ENCODE measurements at regions of chr2 and their contacts with region 1.

Region 1: GRCh38 chr2:43131024-43131889 is 95.1 kb downstream of the ZFP36L2 start:
- DNase-seq: peak; percentile 93
- H3K4me3 Mint-ChIP-seq: peak overlapping the region; percentile 64
- H3K27ac Mint-ChIP-seq: peak overlapping the region; percentile 84
- H3K4me1 Mint-ChIP-seq: peaks cover 78% of the 10 kb centered on the region
- H3K27me3 Mint-ChIP-seq: no peaks in the 10 kb centered on the region

Region 2: GRCh38 chr2:42947809-42948600 is 183.3 kb before region 1 on chr2:
- intact Hi-C with region 1: loop called (anchors 2 kb)
- DNase-seq: no peak
- H3K4me3 Mint-ChIP-seq: no peak overlapping the region
- H3K27ac Mint-ChIP-seq: no peak overlapping the region
- H3K4me1 Mint-ChIP-seq: peaks cover 3% of the 10 kb centered on the region
- H3K27me3 Mint-ChIP-seq: peaks cover 3% of the 10 kb centered on the region

Region 3: DNA sequence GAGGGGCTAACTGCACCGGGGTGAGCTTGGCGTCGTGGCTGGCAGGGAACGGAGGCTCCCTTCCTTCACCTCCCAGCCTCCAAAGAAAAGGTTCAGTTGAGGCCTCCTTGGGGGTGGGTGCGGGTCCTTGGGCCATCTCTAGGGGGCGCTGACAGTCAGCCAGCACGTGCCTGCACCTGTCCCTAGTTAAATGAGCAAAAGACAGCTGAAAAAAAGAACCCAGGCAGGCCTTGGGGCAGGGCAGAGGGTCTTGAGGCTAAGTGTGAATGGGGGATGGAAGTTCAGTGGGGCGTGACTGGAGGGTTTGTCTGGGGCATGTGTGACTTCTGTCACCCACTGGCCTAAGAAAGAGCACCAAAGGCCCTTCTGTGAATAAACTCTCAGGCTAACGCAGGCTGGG is 38.7 kb after region 1 on chr2:
- intact Hi-C with region 1: loop called (anchors 1 kb)
- DNase-seq: peak; percentile 90
- H3K4me3 Mint-ChIP-seq: peak overlapping the region; percentile 77
- H3K27ac Mint-ChIP-seq: peak overlapping the region; percentile 97
- H3K4me1 Mint-ChIP-seq: peaks cover 67% of the 10 kb centered on the region
- H3K27me3 Mint-ChIP-seq: no peaks in the 10 kb centered on the region

Region 4: GRCh38 chr2:43293744-43294695 is 162.8 kb after region 1 on chr2:
- intact Hi-C with region 1: loop called (anchors 5 kb)
- DNase-seq: peak; percentile 88
- H3K4me3 Mint-ChIP-seq: peak overlapping the region; percentile 49
- H3K27ac Mint-ChIP-seq: peak overlapping the region; percentile 76
- H3K4me1 Mint-ChIP-seq: peaks cover 24% of the 10 kb centered on the region
- H3K27me3 Mint-ChIP-seq: no peaks in the 10 kb centered on the region

Region 5: DNA sequence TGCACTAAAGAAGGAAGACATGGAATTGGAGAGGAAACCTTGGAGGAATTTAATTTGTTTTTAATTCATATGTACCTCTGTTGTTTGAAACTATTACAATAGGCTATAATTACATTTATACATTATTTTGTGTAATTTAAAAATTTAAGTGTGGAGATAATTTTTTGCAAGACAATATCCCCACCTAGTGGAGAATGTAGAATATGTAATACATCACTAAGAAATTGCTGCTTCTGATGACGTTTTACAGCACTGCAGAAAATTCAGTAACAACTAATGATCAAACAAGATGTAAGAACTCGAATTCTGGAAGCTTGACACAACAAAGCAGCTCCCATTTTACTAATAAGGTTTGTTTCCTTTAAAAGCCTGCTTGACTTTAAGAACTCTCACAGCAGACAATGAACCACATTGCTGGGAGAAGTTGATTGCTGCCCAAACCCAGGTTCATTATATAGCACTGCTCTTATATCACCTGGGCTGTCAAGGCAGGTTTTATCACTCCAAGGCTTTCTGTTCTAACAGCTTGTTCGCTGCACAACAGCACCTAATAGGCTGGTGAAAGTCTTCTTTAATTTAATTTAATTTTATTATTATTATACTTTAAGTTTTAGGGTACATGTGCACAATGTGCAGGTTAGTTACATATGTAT is 411.2 kb after region 1 on chr2:
- intact Hi-C with region 1: loop called (anchors 2 kb)
- DNase-seq: peak; percentile 56
- H3K4me3 Mint-ChIP-seq: no peak overlapping the region
- H3K27ac Mint-ChIP-seq: no peak overlapping the region
- H3K4me1 Mint-ChIP-seq: peaks cover 8% of the 10 kb centered on the region
- H3K27me3 Mint-ChIP-seq: no peaks in the 10 kb centered on the region